ENCODE measurements at regions of chr19 and their contacts with region 1.

Region 1: DNA sequence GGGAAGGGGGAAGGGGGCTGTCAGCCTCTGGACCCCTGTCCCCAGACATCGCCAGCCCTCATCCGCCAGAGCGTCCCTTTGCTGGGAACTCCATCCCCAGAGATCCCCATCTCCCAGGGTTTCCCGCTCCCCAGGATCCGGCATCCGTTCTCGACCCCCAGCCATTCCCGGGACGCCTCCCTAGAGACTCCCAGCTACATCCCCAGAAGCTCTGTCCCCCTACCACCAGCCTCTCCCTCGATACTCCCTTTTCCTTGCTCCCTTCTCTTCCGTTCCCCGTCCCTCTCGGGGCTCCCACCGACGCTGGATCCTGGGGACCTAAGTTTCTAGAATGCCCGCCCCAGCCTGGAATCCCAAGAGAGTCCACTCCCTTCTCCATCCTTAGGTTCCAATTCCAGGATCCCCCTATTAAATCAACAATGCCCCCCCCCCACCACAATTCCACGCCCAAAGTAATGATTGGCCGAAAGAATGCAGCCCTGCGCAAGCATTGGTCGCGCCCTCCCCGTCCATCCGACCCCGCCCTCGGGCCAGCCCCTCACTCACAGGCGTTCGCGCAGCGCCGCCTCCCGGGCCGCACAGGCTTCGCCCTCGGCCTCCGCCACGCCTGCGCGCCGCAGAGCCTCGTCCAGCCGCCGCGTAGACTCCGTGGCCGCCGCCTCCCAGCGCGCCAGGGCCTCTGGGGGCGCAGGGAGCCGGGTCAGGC is 3.2 kb downstream of the CCDC194 start:
- DNase-seq: peak; percentile 97
- ATAC-seq: peak; percentile 99
- H3K4me3 ChIP-seq: peak overlapping the region; percentile 70
- H3K27ac ChIP-seq: no peak overlapping the region
- H3K4me1 ChIP-seq: peaks cover 11% of the 10 kb centered on the region; the same call in 1 of the 2 replicates
- H3K27me3 ChIP-seq: no peaks in the 10 kb centered on the region
- CTCF ChIP-seq: peak; percentile 67

Region 2: GRCh38 chr19:17292286-17293097 is 98.3 kb before region 1 on chr19:
- CTCF ChIA-PET with region 1: no interaction called
- POLR2A ChIA-PET with region 1: no interaction called
- intact Hi-C with region 1: loop called (anchors 10 kb)
- DNase-seq: peak; percentile 72
- ATAC-seq: peak; percentile 61
- H3K4me3 ChIP-seq: no peak overlapping the region
- H3K27ac ChIP-seq: no peak overlapping the region
- H3K4me1 ChIP-seq: peaks cover 18% of the 10 kb centered on the region
- H3K27me3 ChIP-seq: no peaks in the 10 kb centered on the region
- CTCF ChIP-seq: peak; percentile 56; the same call in 1 of the 2 replicates

Region 3: GRCh38 chr19:17346109-17346671 is 44.6 kb before region 1 on chr19:
- CTCF ChIA-PET with region 1: interaction called, 9 read pairs
- POLR2A ChIA-PET with region 1: no interaction called
- intact Hi-C with region 1: loop called (anchors 1 kb)
- DNase-seq: peak; percentile 79
- ATAC-seq: peak; percentile 87
- H3K4me3 ChIP-seq: no peak overlapping the region
- H3K27ac ChIP-seq: no peak overlapping the region
- H3K4me1 ChIP-seq: peaks cover 10% of the 10 kb centered on the region; the same call in 1 of the 2 replicates
- H3K27me3 ChIP-seq: no peaks in the 10 kb centered on the region
- CTCF ChIP-seq: peak; percentile 85

Region 4: DNA sequence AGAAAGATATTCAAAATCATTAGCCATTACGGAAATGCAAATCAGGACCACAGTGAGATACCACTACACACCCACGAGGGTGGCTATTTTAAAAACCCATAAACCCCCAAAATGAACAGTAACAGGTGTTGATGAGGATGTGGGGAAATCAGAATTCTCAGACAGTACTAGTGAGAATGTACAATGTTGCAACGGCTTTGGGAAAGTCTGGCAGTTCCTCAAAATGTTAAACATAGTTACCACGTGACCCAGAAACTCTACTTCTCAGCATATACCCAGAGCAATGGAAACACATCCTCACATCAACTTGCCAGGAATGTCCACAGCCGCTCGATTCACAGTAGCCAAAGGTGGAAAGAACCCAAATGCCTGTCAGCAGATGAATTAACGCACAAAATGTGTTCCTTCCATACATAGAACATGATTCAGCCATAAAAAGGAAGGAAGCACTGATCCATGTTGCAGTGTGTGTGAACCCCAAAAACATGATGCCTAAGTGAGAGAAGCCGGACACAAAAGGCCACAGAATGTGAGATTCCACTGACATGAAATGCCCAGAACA is 20.7 kb before region 1 on chr19:
- CTCF ChIA-PET with region 1: interaction called, 16 read pairs
- POLR2A ChIA-PET with region 1: no interaction called
- intact Hi-C with region 1: no loop called
- DNase-seq: no peak
- ATAC-seq: no peak
- H3K4me3 ChIP-seq: no peak overlapping the region
- H3K27ac ChIP-seq: no peak overlapping the region
- H3K4me1 ChIP-seq: no peaks in the 10 kb centered on the region
- H3K27me3 ChIP-seq: no peaks in the 10 kb centered on the region
- CTCF ChIP-seq: no peak

Region 5: DNA sequence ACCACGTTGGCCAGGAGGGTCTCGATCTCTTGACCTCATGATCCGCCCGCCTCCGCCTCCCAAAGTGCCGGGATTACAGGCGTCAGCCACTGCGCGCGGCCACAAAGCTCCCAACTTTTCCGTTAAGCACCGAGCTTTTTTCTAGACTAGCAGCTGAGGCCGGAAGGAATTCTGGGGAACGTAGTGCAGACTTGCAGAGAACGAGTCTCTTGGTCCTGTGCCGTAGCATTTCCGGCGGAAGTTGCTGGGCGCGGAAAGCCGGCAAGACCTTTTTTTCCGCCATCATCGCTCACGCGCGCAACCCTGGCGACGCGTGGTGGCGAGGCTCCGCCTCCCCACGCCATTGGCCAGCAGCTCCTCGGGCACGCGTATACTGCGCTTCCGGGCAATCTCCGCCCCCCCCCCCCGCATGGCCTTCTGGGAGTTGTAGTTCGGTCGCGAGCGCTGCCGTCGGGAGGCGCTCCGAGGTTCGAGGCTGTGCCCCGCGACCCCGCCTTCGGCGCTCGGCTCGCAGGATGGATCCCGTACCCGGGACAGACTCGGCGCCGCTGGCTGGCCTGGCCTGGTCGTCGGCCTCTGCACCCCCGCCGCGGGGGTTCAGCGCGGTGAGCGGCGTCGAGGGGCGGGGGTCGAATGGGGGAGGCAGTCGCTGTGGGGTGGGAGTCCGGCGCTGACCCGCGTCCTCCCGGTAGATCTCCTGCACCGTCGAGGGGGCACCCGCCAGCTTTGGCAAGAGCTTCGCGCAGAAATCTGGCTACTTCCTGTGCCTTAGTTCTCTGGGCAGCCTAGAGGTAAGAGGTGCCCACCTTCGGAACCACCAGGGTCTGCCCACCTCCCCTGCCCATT is 29.0 kb after region 1 on chr19 and contains the start of gene MVB12A:
- CTCF ChIA-PET with region 1: no interaction called
- POLR2A ChIA-PET with region 1: no interaction called
- intact Hi-C with region 1: loop called (anchors 1 kb)
- DNase-seq: peak; percentile 99
- ATAC-seq: peak; percentile 93
- H3K4me3 ChIP-seq: peak within 1 kb of the TSS; percentile 88
- H3K27ac ChIP-seq: peak within 1 kb of the TSS; percentile 34
- H3K4me1 ChIP-seq: peaks cover 16% of the 10 kb centered on the region; the same call in 1 of the 2 replicates
- H3K27me3 ChIP-seq: no peaks in the 10 kb centered on the region
- CTCF ChIP-seq: no peak
- total RNA-seq, gene MVB12A: 82.5 and 103 TPM in 2 replicates

Region 6: DNA sequence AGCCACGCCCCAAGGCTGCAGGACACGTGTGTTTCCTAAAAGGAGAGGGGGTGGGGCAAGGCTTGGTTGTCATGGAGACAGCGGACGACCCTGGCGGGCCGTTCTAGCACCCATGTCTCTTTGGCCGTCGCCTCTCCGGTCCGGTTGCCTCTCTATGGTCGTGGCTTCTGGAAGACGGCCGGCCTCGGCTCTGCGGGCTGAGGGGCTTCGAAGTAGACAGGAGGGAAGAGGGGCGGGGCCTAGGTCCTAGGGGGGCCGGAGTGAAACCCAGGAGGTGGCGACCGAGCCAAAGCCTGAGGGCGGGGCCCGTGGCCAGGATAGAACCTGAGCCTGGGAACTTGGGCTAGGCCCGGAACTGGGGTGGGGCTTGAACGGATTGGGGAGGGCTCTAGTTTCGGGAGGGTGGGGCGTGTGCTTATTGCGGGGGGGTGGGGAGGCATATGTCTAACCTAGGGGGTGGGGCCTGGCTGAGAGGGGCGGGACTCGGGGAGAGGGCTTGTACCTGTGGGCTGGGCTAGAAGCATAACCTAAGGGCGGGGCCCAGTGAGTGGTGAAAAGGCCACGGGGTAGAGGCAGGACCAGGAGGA is 78.8 kb after region 1 on chr19:
- CTCF ChIA-PET with region 1: no interaction called
- POLR2A ChIA-PET with region 1: no interaction called
- intact Hi-C with region 1: loop called (anchors 5 kb)
- DNase-seq: peak; percentile 97
- ATAC-seq: peak; percentile 69
- H3K4me3 ChIP-seq: peak overlapping the region; percentile 91
- H3K27ac ChIP-seq: peak overlapping the region; percentile 65
- H3K4me1 ChIP-seq: peaks cover 14% of the 10 kb centered on the region
- H3K27me3 ChIP-seq: no peaks in the 10 kb centered on the region
- CTCF ChIP-seq: no peak